Astrocyte of the cerebellum (primary cell): ENCODE measurements at regions of chr1 and their contacts with region 1.

Region 1: DNA sequence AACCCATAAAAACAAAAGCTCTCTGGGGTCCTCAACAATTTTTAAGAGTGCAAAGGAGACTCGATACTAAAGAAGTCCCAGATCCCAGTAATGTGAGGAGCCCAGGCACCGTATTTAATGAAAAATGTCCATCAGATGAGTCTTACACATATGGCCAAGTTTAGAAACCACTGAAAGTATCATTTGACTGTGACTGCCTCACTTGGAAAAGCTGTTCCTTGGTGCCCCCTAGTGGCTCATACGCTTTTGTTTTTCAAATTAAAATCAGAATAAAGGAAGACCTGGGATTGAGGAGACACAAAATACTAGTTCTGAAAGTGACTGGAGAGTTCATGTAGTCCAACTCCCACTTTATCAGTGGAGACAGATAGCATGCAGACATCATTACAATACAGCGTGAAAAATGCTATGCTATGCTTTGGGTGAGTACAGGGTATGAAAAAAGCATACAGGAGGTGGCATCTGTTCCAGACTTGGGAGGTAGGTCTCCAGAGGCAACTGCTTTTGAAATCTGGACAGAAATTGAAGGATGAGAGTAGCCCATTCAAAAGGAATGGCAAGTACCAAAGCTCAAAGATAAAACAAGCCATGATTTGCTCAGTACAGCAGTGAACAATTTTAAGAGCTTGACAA is 33.8 kb downstream of the GDAP2 start:
- DNase-seq: peak; percentile 90
- H3K4me3 ChIP-seq: no peak overlapping the region
- CTCF ChIP-seq: peak; percentile 66

Region 2: GRCh38 chr1:117534995-117535467 is 360.6 kb before region 1 on chr1:
- in situ Hi-C with region 1: loop called (anchors 25 kb)
- DNase-seq: peak; percentile 37
- H3K4me3 ChIP-seq: no peak overlapping the region
- CTCF ChIP-seq: peak; percentile 64

Region 3: DNA sequence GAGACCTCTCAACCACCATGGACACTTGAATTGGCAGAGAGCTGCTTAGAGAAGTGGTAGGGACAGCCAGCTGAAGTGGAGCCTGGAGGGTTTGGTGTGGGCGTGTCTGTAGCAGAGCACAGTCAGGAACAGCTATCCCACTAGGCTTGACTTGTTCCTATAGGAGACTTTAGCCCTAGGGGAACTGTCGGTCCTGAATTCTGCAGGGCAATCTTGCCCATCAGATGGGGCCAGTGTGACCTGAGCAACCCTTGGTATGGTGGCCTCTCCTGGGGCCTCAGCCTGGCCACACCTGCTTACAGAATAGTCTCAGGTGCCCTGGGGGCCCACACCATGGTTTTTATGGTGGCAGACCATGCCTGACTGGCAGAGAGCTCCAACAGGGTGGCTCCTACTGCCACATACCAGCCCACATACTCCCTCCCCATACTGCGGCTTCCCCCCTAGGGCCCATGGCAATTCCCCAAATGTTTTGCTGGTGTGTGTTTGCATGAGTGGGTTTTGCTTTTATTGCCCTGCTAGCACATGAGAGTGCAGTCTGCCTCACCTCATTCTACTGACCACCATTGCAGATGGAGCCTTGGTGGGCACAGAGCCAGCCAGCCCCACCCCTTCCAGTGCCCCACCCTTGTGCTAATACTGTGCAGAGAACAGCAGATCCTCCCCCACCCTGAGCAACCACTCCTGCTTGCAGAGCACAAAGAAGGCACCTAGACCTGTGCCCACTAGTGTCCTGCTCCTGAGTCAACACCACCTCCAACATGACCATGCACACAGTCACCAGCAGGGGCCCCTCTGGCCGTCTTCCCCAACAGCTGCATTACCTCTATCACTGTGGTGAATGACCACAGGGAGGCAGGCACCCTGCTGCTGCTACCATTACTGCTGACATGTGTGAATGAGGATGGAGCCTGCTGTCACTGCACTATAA is 53.1 kb before region 1 on chr1:
- in situ Hi-C with region 1: no loop called
- DNase-seq: no peak
- H3K4me3 ChIP-seq: no peak overlapping the region
- CTCF ChIP-seq: no peak